ENCODE measurements at regions of chrX and their contacts with region 1.

Region 1: DNA sequence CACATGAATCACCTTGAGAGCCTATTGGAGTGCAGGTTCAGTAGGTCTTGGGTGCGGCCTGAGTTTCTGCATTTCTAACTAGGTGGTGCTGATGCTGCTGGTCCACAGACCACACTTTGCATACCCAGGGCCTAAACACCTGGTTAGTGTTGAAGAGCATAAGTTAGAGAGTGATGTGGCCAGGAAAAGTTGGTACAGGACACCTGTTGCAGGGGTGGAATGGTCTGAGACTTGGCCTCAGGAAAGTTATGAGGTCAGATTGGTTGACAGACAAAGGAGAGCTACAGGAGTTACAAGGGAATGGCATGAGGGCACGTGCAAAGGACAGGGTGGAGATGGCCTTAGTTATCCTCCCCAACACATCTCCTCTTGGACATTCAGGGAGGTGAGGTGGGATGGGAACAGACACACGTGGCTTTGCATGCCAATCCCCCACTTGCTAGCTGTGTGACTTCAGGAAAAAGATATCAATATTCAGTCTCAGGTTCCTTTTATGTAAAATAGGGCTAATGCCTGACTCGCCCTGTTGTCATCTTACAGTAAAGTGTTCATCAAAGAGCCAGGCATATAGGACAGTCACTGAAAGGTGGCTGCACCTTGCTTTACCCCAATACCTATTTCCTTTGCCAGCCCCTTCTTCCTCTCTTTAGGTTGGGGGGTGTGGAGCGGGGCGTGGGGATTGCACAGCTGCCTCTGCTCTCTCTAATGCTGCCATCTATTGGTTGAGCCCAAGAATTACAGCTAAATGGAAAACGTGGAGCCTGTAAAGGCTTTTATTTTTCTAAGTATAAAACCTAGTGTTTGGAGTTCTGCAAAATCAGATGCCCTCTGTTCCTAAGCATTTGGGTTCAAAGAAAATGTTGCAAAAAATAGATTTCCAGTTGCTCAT is 47.5 kb downstream of the ATG4A start:
- DNase-seq: no peak
- ATAC-seq: peak in 2 of 8 donors; percentile 14 to 44
- H3K4me3 ChIP-seq: no peak overlapping the region
- H3K27ac ChIP-seq: no peak overlapping the region
- H3K4me1 ChIP-seq: no peaks in the 10 kb centered on the region
- H3K27me3 ChIP-seq: peaks cover 0 to 6% (median 0%) of the 10 kb centered on the region in 7 donors
- CTCF ChIP-seq: peak; percentile 19 to 56 (median 48)

Region 2: GRCh38 chrX:108020631-108021030 is 118.4 kb before region 1 on chrX:
- intact Hi-C with region 1: loop called in 5 of 10 experiments (anchors 2 to 10 kb)
- DNase-seq: no peak
- ATAC-seq: no peak
- H3K4me3 ChIP-seq: no peak overlapping the region
- H3K27ac ChIP-seq: no peak overlapping the region
- H3K4me1 ChIP-seq: no peaks in the 10 kb centered on the region
- H3K27me3 ChIP-seq: peaks cover 0 to 36% (median 0%) of the 10 kb centered on the region in 7 donors
- CTCF ChIP-seq: peak; percentile 10 to 54 (median 47)